HepG2 (cell line): ENCODE measurements at regions of chr5 and their contacts with region 1.

Region 1: GRCh38 chr5:58460732-58461286 is 923 bp upstream of the PLK2 start:
- DNase-seq: peak; percentile 64
- ATAC-seq: peak; percentile 75
- H3K4me3 ChIP-seq: peak overlapping the region; percentile 32 to 79 (median 71); a peak in 4 of 6 replicates
- H3K27ac ChIP-seq: peak overlapping the region; percentile 73
- H3K4me1 ChIP-seq: peaks cover 41% of the 10 kb centered on the region
- H3K27me3 ChIP-seq: no peaks in the 10 kb centered on the region; a peak in 1 of 5 replicates
- CTCF ChIP-seq: peak; percentile 89
- EP300 ChIP-seq: no peak
- POLR2A ChIP-seq: no peak
- RAD21 ChIP-seq: peak; percentile 69

Region 2: DNA sequence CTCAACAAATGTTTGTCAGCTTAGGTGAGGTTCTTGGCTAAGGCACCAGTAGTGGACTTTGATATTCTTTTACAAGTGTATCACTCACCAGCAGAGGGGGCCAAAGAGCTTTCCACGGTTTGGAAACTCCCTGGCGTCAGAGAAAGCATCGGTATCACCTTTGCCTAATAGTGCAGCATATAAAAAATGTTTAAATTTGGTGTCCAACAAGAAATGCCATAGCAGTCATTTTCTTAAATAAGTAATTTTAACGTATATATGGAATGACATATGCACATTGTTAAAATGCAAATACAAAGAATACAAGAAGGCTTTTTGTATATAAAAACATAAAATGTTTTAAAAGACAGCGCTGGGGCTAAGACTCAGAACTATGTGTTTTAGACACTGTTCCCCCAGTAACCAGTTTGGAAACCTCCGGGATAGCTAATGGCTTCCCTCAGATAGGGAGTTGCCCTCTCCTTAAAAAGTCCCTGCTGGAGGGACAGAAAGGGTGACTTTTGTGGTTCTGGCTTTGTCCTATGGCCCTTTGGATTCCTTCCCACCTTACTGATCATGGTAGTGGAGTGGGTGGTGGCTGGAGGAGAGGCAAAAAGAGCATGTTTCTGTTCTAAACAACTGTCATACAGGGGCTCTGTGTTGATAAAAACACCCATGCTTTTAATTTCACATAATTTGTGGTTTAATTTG is 1162.4 kb before region 1 on chr5:
- CTCF ChIA-PET with region 1: interaction called, 38 read pairs
- POLR2A ChIA-PET with region 1: interaction called, 4 read pairs
- in situ Hi-C with region 1: loop called (anchors 5 kb)
- intact Hi-C with region 1: loop called (anchors 1 kb)
- DNase-seq: peak; percentile 73
- ATAC-seq: peak; percentile 91
- H3K4me3 ChIP-seq: no peak overlapping the region
- H3K27ac ChIP-seq: no peak overlapping the region
- H3K4me1 ChIP-seq: peaks cover 15% of the 10 kb centered on the region; the same call in 1 of the 2 replicates
- H3K27me3 ChIP-seq: no peaks in the 10 kb centered on the region; a peak in 1 of 5 replicates
- CTCF ChIP-seq: peak; percentile 79
- EP300 ChIP-seq: no peak
- POLR2A ChIP-seq: no peak
- RAD21 ChIP-seq: peak; percentile 64; the same call in 1 of the 2 replicates

Region 3: DNA sequence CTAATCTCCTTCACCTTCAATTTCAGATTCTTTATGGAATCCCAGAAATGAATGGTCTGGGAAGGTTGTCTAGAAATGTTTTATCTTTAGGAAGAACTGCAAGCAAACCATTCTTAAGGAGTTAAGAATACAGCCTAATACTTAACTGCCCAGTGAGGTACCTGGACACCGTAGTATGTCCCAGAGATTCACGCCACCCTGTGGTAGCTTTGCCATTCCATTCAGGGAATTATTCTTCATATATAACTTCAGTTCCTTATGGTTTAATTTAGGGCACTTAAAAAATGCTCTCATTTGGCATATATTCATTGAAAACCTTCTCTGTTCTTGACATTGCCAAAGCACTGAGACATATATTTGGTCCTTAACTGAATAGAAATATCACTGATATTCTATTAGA is 1027.9 kb before region 1 on chr5:
- CTCF ChIA-PET with region 1: no interaction called
- POLR2A ChIA-PET with region 1: no interaction called
- in situ Hi-C with region 1: no loop called
- intact Hi-C with region 1: loop called (anchors 1 kb)
- DNase-seq: peak; percentile 28
- ATAC-seq: peak; percentile 72
- H3K4me3 ChIP-seq: no peak overlapping the region
- H3K27ac ChIP-seq: no peak overlapping the region
- H3K4me1 ChIP-seq: no peaks in the 10 kb centered on the region
- H3K27me3 ChIP-seq: no peaks in the 10 kb centered on the region
- CTCF ChIP-seq: peak; percentile 44
- EP300 ChIP-seq: no peak
- POLR2A ChIP-seq: no peak
- RAD21 ChIP-seq: no peak

Region 4: GRCh38 chr5:57482671-57483106 is 978.1 kb before region 1 on chr5 and contains the start of gene ACTBL2:
- CTCF ChIA-PET with region 1: no interaction called
- POLR2A ChIA-PET with region 1: no interaction called
- in situ Hi-C with region 1: no loop called
- intact Hi-C with region 1: no loop called
- DNase-seq: no peak
- ATAC-seq: no peak
- H3K4me3 ChIP-seq: no peak within 1 kb of the TSS
- H3K27ac ChIP-seq: no peak within 1 kb of the TSS
- H3K4me1 ChIP-seq: no peaks in the 10 kb centered on the region
- H3K27me3 ChIP-seq: no peaks in the 10 kb centered on the region
- CTCF ChIP-seq: no peak
- EP300 ChIP-seq: no peak
- POLR2A ChIP-seq: no peak
- RAD21 ChIP-seq: no peak
- total RNA-seq, gene ACTBL2: not detected in 2 replicates

Region 5: GRCh38 chr5:57499262-57500050 is 961.4 kb before region 1 on chr5:
- CTCF ChIA-PET with region 1: interaction called, 13 read pairs
- POLR2A ChIA-PET with region 1: interaction called, 9 read pairs
- in situ Hi-C with region 1: loop called (anchors 25 kb)
- intact Hi-C with region 1: loop called (anchors 1 kb)
- DNase-seq: peak; percentile 5
- ATAC-seq: peak; percentile 72
- H3K4me3 ChIP-seq: no peak overlapping the region
- H3K27ac ChIP-seq: no peak overlapping the region
- H3K4me1 ChIP-seq: no peaks in the 10 kb centered on the region
- H3K27me3 ChIP-seq: peaks cover 0 to 8% of the 10 kb centered on the region in 2 experiments; a peak in 2 of 5 replicates
- CTCF ChIP-seq: peak; percentile 66
- EP300 ChIP-seq: no peak
- POLR2A ChIP-seq: no peak
- RAD21 ChIP-seq: no peak; the same call in 1 of the 2 replicates

Region 6: GRCh38 chr5:57779383-57780223 is 681.2 kb before region 1 on chr5:
- CTCF ChIA-PET with region 1: interaction called, 7 read pairs
- POLR2A ChIA-PET with region 1: interaction called, 12 read pairs
- in situ Hi-C with region 1: loop called (anchors 5 kb)
- intact Hi-C with region 1: loop called (anchors 1 kb)
- DNase-seq: peak; percentile 49
- ATAC-seq: peak; percentile 83
- H3K4me3 ChIP-seq: no peak overlapping the region
- H3K27ac ChIP-seq: no peak overlapping the region
- H3K4me1 ChIP-seq: peaks cover 31% of the 10 kb centered on the region
- H3K27me3 ChIP-seq: no peaks in the 10 kb centered on the region
- CTCF ChIP-seq: peak; percentile 66
- EP300 ChIP-seq: no peak
- POLR2A ChIP-seq: no peak
- RAD21 ChIP-seq: peak; percentile 38; the same call in 1 of the 2 replicates

Region 7: DNA sequence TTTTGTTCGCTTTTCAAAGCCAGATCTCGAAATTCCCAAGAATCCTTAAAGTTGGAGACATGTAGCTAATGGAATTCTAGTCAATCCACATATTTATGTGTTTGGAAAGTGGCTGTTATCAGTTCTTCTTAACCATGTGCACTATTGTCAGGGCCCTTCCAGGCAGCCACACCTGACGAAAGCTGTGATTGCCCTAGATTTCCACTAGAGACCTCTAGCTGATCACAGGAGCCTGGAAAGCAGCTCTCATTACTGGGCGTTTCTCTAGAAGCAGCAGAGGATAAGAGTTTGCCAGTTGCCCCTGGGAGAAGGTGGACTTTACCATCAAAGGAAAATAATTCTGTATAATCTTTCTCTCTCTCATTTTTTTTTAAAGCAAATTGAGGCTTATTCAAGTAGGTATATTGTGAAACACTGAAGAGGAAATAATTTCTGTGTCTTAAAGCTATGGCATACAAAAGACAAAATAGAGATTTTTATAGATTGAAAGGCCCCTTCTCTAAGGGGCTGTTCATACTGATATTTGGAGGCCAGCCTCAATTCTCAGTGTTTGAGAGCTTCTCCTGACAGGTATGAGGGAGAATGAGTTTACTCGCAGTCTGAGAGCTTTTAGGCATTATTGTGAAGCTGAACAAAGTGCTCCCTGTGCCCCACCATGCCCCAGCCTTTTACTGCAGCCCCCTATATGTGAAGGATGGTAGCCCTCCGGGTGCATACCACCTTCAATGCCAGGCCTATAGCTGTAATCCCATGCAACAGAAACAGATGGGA is 572.8 kb before region 1 on chr5:
- CTCF ChIA-PET with region 1: no interaction called
- POLR2A ChIA-PET with region 1: interaction called, 3 read pairs
- in situ Hi-C with region 1: loop called (anchors 5 kb)
- intact Hi-C with region 1: loop called (anchors 2 kb)
- DNase-seq: peak; percentile 23
- ATAC-seq: peak; percentile 92
- H3K4me3 ChIP-seq: no peak overlapping the region
- H3K27ac ChIP-seq: no peak overlapping the region
- H3K4me1 ChIP-seq: no peaks in the 10 kb centered on the region
- H3K27me3 ChIP-seq: no peaks in the 10 kb centered on the region
- CTCF ChIP-seq: peak; percentile 39; the same call in 1 of the 2 replicates
- EP300 ChIP-seq: no peak
- POLR2A ChIP-seq: no peak
- RAD21 ChIP-seq: peak; percentile 18; the same call in 1 of the 2 replicates

Region 8: GRCh38 chr5:58498340-58498942 is 37.6 kb after region 1 on chr5:
- CTCF ChIA-PET with region 1: no interaction called
- POLR2A ChIA-PET with region 1: no interaction called
- in situ Hi-C with region 1: no loop called
- intact Hi-C with region 1: no loop called
- DNase-seq: peak; percentile 24
- ATAC-seq: 0 out of 3 replicates have a peak, but pooled peaks have one; percentile 40
- H3K4me3 ChIP-seq: no peak overlapping the region
- H3K27ac ChIP-seq: no peak overlapping the region
- H3K4me1 ChIP-seq: no peaks in the 10 kb centered on the region
- H3K27me3 ChIP-seq: no peaks in the 10 kb centered on the region
- CTCF ChIP-seq: peak; percentile 66
- EP300 ChIP-seq: no peak
- POLR2A ChIP-seq: no peak
- RAD21 ChIP-seq: no peak

Region 9: GRCh38 chr5:58582803-58583491 is 122.1 kb after region 1 on chr5 and contains the start of gene RAB3C:
- CTCF ChIA-PET with region 1: no interaction called
- POLR2A ChIA-PET with region 1: no interaction called
- in situ Hi-C with region 1: no loop called
- intact Hi-C with region 1: no loop called
- DNase-seq: peak; percentile 78
- ATAC-seq: peak; percentile 100
- H3K4me3 ChIP-seq: peak within 1 kb of the TSS; percentile 43 to 68 (median 55)
- H3K27ac ChIP-seq: no peak within 1 kb of the TSS
- H3K4me1 ChIP-seq: peaks cover 16% of the 10 kb centered on the region
- H3K27me3 ChIP-seq: peaks cover 2 to 4% of the 10 kb centered on the region in 2 experiments; a peak in 4 of 5 replicates
- CTCF ChIP-seq: no peak
- EP300 ChIP-seq: no peak
- POLR2A ChIP-seq: no peak
- RAD21 ChIP-seq: 0 out of 2 replicates have a peak, but pooled peaks have one; percentile 31
- total RNA-seq, gene RAB3C: not detected in 2 replicates